ENCODE measurements at regions of chr6 and their contacts with region 1.

Region 1: GRCh38 chr6:1524040-1524480 is 85.7 kb upstream of the FOXC1 start:
- H3K4me3 ChIP-seq: no peak overlapping the region
- H3K27ac ChIP-seq: no peak overlapping the region
- H3K4me1 ChIP-seq: peaks cover 6% of the 10 kb centered on the region; the same call in 1 of the 2 replicates
- CTCF ChIP-seq: no peak

Region 2: DNA sequence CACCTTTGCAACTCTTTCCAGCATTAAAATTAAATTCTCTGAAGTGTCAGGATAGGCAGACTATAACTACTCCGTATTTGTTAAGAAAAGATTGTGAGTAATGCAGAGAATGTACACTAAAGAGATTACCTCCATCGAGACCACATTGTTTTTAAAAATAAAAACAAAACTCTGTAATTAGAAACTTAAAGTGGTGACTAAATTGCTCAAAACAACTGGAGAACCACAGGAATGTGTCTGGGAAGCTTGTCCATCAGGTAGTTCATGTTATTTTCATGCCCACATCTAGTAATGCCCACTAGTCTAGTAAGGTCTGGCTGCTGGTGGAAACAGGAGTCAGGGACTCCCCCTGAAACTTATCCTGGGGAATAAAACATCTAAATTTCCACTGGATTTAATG is 315.2 kb before region 1 on chr6:
- CTCF ChIA-PET with region 1: no interaction called
- POLR2A ChIA-PET with region 1: no interaction called
- H3K4me3 ChIP-seq: no peak overlapping the region
- H3K27ac ChIP-seq: no peak overlapping the region
- H3K4me1 ChIP-seq: no peaks in the 10 kb centered on the region
- CTCF ChIP-seq: no peak

Region 3: DNA sequence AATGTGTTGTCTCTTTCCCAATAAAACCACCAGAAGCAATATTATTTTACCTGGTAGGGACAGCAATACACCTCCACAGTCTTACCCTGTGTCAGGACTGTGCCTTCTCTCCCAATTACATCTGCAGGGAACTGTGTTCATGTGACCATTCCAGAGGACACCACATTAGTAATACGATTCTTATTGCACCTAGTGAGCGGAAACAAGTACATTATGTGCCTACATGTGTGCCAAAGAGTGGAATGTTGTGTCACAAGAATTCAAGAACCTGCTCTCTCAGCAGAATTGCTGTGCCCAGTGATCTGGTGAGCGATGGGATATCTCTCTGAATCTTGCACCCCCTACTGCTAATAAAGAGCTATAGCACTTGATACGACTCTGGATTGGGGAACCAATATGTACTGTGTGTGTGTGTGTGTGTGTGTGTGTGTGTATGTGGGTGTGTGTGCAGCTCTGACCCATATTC is 28.3 kb after region 1 on chr6:
- CTCF ChIA-PET with region 1: interaction called, 13 read pairs
- POLR2A ChIA-PET with region 1: no interaction called
- H3K4me3 ChIP-seq: no peak overlapping the region
- H3K27ac ChIP-seq: no peak overlapping the region
- H3K4me1 ChIP-seq: no peaks in the 10 kb centered on the region
- CTCF ChIP-seq: no peak